ENCODE measurements at regions of chr2 and their contacts with region 1.

Region 1: DNA sequence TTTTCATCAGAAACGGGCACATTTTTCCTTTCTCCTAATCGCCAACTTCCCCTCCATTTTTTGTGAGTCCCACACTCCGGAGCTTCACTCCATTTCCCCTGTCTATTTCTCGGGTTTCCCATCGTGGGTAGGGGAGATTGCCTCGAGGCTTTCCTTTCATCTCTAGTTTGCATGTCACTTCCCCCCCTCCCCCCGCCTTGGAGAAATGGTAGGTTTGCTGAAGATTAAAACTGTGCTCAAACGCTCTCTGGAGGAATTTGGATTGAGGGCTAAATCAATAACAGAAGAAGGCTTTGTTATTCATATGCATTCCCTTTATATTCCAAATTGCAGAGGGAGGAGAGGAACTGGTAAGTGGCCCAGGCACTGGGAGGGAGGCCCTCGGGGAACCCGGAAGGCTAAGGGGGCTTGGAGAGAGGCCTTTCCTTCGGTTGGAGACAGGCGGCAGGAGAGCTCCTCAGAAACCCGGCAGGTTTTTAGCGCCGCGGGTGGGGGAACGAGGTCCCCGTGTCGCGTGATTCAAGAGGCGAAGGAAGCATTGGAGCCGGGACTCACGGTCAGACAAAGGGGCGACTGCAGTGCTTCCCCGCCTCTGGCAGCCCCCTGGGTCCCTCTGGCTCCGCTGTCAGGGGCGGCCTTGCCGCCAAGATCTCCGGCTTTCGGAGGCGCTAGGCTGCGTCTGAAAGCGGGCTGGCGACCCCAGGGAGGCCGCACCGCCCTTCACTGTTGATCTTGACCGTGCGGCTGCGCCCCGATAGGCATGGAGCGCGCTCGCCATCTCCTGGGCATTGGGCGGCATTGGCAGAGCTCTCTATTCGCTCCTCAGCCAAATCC is 2.4 kb upstream of the HOXD12 start:
- DNase-seq: peak; percentile 31
- H3K4me3 Mint-ChIP-seq: peak overlapping the region; percentile 78
- H3K27ac Mint-ChIP-seq: peak overlapping the region; percentile 25
- H3K4me1 Mint-ChIP-seq: peaks cover 14% of the 10 kb centered on the region
- H3K27me3 Mint-ChIP-seq: peaks cover 83% of the 10 kb centered on the region

Region 2: DNA sequence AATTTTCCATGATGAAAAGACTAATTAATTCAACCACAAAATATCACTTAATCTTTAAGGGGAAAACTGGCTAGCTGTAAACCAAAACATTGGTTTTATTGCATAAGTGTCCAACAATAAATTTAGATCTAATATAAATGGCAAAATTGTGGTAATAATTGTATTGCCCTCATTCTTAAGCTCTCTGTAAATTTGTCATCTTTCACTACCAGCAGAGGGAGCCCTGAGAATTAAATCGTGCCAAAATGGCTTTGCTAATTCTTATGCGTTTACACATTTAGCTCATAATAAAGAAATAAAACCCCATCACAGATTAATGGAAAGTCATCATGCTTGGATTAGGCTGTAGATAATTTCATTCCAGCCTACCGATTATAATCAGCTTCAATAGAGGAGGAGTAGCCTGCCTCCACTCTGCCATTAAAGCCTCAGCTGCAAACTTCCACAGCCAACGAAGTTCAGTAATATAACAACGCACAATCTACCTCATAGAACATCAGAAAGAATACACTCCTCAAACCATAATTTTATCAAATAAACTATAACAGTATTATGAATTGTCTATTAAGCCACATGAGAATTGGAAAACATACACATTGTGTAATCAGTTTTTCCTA is 845.7 kb before region 1 on chr2:
- intact Hi-C with region 1: loop called (anchors 2 kb)
- DNase-seq: no peak
- H3K4me3 Mint-ChIP-seq: no peak overlapping the region
- H3K27ac Mint-ChIP-seq: no peak overlapping the region
- H3K4me1 Mint-ChIP-seq: peaks cover 5% of the 10 kb centered on the region
- H3K27me3 Mint-ChIP-seq: peaks cover 23% of the 10 kb centered on the region

Region 3: DNA sequence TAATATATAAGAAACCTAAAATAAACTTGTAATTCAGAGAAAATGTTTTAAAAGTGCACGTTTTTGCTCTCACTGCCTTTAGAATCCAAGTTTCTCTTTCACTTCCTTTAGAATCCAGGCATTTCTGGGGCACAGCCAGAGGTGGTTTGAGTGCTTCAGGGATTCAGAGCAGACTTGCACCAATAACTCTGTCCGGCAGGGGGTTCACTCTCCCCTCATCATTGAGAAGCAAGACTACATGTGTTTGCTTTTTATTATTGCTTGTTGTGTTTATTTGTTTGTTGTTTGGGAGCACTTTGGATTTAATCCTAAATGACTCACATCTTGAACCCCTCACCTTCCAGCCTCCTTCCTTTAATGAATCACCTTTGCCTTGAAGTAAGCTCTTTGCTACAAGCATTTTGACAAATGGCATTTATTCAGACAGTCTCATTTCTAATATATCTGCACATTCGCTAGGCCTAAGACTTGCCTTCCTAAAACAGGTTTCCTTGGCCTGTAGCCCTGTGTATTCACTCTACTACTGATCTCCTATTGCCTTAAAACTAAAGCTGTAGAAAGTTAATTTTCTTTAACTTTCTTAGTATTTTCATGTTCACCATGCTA is 682.2 kb before region 1 on chr2:
- intact Hi-C with region 1: loop called (anchors 2 kb)
- DNase-seq: no peak
- H3K4me3 Mint-ChIP-seq: no peak overlapping the region
- H3K27ac Mint-ChIP-seq: no peak overlapping the region
- H3K4me1 Mint-ChIP-seq: no peaks in the 10 kb centered on the region
- H3K27me3 Mint-ChIP-seq: peaks cover 2% of the 10 kb centered on the region

Region 4: DNA sequence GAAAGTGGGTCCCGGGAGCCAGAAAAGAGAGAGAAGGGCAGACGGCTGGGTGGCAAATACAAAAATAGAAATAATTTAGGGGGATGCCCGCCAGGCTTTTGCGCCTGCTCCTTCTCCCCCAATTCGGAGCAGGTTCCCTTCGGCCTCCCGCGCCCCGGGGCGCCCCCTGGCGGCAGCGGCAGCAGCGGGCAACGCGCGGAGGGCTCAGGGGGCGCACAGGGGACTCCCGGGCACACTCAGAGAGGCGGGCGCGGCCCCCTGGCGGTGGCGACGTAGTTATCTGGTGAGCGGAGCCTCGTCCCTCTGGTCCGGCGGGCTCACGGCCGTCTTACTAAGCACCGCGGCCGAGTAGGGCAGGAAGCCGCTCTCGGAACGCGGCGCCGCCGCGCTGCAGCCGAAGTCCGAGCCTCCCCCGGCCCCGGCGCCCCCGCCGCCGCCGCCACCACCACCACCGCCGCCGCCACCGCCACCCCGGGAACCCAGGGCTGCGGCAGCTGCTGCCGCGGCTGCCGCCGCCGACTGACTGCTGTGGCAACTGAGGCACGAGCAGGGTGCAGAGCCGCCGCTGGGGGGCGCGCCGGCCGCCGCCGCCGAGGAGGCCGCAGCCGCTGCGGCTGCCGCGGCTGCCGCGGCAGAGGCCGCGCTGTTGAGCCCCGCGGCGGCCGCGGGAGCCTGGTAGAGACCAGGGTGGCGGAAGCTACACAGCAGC is 17.2 kb before region 1 on chr2:
- intact Hi-C with region 1: loop called (anchors 1 kb)
- DNase-seq: no peak
- H3K4me3 Mint-ChIP-seq: peak overlapping the region; percentile 15
- H3K27ac Mint-ChIP-seq: peak overlapping the region; percentile 89
- H3K4me1 Mint-ChIP-seq: no peaks in the 10 kb centered on the region
- H3K27me3 Mint-ChIP-seq: peaks cover 72% of the 10 kb centered on the region

Measured in activated T-helper 1 cell treated with anti-CD3 and anti-CD28 coated beads, Interleukin-12 subunit alpha, Interleukin-12 subunit beta, Interleukin-2, Interleukin-4 antibody, amounts not matched to agents 30 ng/mL and 10 ng/mL and 1 ng/mL, durations not matched to agents 14 hours and 24 hours and 36 hours (primary cell).